ENCODE measurements at regions of chr19 and their contacts with region 1.

Region 1: GRCh38 chr19:19170053-19170872 is at the start of gene MEF2B:
- DNase-seq: peak; percentile 45 to 84 (median 77)
- ATAC-seq: peak; percentile 98
- H3K4me3 ChIP-seq: peak within 1 kb of the TSS; percentile 32
- H3K4me3 Mint-ChIP-seq: peak within 1 kb of the TSS; percentile 2 to 84 (median 71)
- H3K27ac ChIP-seq: no peak within 1 kb of the TSS
- H3K27ac Mint-ChIP-seq: peak within 1 kb of the TSS in 8 of 9 donors; percentile 25 to 70 (median 51)
- H3K4me1 ChIP-seq: peaks cover 0 to 10% of the 10 kb centered on the region in 2 donors
- H3K4me1 Mint-ChIP-seq: peaks cover 14 to 20% (median 17%) of the 10 kb centered on the region in 7 donors
- H3K27me3 ChIP-seq: no peaks in the 10 kb centered on the region
- H3K27me3 Mint-ChIP-seq: peaks cover 0 to 5% (median 0%) of the 10 kb centered on the region in 5 donors
- total RNA-seq, gene MEF2B: 3.0 to 6.4 (median 4.9) TPM

Region 2: DNA sequence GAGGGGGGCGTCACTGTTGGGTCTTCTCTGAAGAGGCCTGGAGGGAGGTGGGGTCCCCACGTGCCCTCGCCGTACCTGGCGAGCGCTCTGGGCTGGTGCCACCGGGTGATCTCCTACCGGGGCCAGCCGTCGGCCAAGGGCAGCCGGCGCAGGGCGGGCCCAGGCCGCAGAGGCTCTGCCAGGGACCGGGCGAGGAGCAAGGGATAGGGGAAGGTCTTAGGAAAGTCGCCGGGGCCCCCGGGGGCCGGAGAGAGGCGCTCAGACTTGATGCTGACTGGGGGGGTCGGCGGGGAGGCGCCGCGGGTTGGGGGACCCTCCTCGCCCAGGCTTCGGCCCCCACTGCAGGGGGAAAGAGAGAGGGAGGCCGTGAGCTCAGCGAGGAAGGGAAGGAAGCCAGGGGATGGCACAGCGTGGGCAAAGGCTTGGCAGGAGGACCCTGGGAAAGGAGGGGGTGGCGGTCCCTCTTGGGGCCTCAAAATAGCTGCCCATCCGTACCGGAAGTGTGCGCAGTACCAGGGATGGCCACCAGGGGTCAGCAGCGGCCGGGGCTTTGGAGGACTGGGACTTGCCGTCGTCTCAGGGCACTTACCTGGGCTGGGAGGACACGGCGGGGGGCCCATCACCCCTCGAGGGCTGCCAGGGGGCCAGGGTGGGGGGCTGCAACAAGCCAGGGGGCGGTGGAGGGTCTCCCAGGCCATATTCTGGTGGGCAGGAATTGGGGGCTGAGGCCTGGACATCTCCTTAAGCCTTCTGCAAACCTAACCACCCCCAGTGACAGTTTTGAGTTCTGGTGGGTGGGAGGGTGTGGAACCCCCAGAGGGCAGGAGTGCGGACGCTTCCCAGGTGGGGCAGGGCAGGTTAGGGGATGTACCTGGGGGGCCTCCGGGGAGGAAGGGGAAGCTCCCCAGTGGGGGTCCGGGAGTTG is 24.3 kb before region 1 on chr19:
- CTCF ChIA-PET with region 1: interaction called, 6 read pairs
- POLR2A ChIA-PET with region 1: no interaction called
- intact Hi-C with region 1: loop called (anchors 1 kb)
- DNase-seq: peak; percentile 68 to 93 (median 80)
- ATAC-seq: peak; percentile 96
- H3K4me3 ChIP-seq: no peak overlapping the region
- H3K4me3 Mint-ChIP-seq: no peak overlapping the region
- H3K27ac ChIP-seq: no peak overlapping the region
- H3K27ac Mint-ChIP-seq: no peak overlapping the region
- H3K4me1 ChIP-seq: no peaks in the 10 kb centered on the region
- H3K4me1 Mint-ChIP-seq: no peaks in the 10 kb centered on the region
- H3K27me3 ChIP-seq: no peaks in the 10 kb centered on the region
- H3K27me3 Mint-ChIP-seq: no peaks in the 10 kb centered on the region

Measured in naive thymus-derived CD4-positive, alpha-beta T cell (primary cell).